Colonic mucosa (tissue), 4 donors: ENCODE measurements at regions of chr20 and their contacts with region 1.

Region 1: GRCh38 chr20:32902456-32903420 is 44.0 kb downstream of the EFCAB8 start:
- DNase-seq: peak; percentile 31
- H3K4me3 ChIP-seq: no peak overlapping the region
- H3K27ac ChIP-seq: no peak overlapping the region
- H3K4me1 ChIP-seq: no peaks in the 10 kb centered on the region
- H3K27me3 ChIP-seq: no peaks in the 10 kb centered on the region
- CTCF ChIP-seq: peak; percentile 85

Region 2: DNA sequence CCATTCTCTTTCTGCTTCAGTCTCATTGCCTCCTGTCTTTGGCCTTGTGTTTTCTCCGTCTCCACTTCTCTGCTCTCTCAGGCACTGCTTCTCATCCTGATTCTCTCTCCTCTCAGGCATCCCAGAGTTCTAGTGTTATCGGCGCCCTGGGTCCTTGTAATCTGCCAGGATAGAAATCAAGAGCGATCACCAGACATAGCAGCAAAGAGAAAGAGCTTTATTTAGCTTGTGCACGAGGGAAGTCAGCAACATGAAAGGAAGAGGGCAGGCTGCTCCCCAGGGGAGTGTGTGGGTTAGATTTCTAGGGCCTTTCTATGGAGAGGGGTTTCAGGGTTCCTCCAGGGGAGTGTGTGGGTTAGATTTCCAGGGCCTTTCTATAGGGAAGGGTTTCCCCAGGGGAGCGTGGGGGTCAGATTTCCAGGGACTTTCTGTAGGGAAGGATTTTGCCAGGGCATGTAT is 69.0 kb after region 1 on chr20:
- intact Hi-C with region 1: no loop called
- DNase-seq: peak; percentile 15
- H3K4me3 ChIP-seq: no peak overlapping the region
- H3K27ac ChIP-seq: peak overlapping the region; percentile 44
- H3K4me1 ChIP-seq: no peaks in the 10 kb centered on the region
- H3K27me3 ChIP-seq: no peaks in the 10 kb centered on the region
- CTCF ChIP-seq: no peak

Region 3: DNA sequence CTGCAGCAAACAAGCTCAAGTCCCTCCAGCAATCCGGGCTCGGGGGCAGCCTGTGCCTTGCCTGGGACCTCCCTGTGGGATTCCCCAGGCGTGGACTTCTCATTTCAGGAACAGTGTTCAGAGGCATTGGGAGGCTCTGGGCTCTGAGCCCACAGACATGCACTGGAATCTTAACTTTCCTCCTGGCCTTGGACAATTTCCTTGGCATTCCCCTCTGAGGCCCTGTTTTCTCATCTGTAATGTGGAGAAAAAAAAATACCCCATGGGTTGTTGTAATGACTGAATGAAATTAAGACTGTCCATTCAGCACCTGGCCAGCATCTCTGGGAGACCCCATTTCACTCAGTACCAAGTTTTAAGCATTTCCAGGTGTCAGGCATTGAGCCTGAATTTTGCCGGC is 194.3 kb after region 1 on chr20:
- intact Hi-C with region 1: loop called (anchors 10 kb)
- DNase-seq: no peak
- H3K4me3 ChIP-seq: no peak overlapping the region
- H3K27ac ChIP-seq: no peak overlapping the region
- H3K4me1 ChIP-seq: no peaks in the 10 kb centered on the region
- H3K27me3 ChIP-seq: no peaks in the 10 kb centered on the region
- CTCF ChIP-seq: no peak

Region 4: DNA sequence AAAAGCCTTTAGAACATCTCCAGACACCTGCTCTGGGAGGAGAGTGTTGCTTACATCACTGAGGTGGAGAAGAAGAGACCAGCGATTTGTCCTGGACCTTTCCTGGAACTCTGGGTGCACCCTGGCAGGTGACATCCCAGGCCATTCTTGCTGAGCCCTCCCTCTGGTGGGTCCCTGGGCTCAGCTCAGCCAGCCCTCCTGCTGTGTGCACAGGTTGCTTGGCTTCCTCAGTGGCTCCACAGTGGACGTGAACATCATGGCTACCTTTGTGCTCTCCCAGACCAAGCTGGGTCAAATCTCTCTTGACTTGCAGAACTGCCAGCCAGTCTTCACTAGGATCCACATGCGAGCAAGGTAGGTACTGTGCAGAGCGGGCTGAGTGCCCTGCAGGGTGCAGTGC is 245.3 kb after region 1 on chr20:
- intact Hi-C with region 1: no loop called
- DNase-seq: no peak
- H3K4me3 ChIP-seq: no peak overlapping the region
- H3K27ac ChIP-seq: no peak overlapping the region
- H3K4me1 ChIP-seq: no peaks in the 10 kb centered on the region
- H3K27me3 ChIP-seq: no peaks in the 10 kb centered on the region
- CTCF ChIP-seq: no peak

Region 5: DNA sequence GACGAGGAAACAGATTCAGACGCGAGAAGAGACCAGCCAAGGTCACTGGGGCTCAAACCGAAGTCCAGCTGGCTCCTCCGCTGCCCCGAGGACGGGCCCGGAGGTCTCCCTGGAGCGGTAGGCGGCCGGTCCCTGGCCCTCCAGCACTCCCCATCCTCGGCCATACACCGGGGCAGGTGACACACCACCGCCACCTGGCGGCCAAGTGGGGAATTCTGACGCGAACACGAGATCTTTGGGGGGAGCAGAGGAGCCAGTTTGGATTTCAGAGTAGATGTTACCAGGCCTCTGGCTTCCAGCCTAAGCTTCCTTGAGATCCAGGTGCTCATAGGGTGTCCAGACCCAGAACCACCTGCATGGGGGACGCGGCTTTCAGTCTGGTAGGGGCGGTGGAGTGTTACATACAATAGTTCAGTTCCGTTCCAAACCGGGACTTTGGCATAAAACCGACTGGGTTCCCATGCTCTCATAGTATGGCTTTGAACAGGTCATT is 396.4 kb after region 1 on chr20:
- intact Hi-C with region 1: loop called (anchors 5 kb)
- DNase-seq: peak; percentile 61
- H3K4me3 ChIP-seq: no peak overlapping the region
- H3K27ac ChIP-seq: no peak overlapping the region
- H3K4me1 ChIP-seq: no peaks in the 10 kb centered on the region
- H3K27me3 ChIP-seq: no peaks in the 10 kb centered on the region
- CTCF ChIP-seq: peak; percentile 94